ENCODE measurements at regions of chr6 and their contacts with region 1.

Region 1: DNA sequence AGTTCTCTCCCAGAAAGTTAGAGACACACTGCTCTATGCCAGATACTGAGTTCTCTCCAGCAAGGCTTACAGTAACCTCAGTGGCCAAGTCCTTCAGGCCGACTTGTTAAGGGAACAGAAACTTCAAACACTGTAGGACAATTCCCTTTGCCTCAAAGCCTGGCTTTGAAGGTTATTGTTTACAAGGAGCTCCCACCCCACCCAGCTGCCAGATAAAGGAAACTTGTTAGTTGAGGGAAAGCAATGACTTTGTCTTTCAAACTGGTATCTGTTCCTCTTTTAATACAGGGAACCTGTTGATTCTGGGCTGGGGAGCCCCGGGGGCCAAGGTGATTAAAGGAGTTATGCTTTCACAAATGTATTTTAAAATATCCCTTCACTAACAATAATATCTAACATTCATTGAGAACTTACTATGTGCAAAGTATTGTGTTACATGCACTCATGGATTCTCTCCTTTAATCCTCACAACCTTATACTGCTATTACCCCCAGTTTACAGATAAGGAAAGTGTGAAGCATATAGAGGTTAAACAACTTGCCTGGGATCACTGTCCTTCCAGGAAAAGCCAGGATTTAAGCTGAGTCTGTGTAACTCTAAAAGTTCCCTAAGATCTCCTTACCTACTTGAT is 27.6 kb upstream of the CDKN1A start:
- DNase-seq: peak; percentile 71
- ATAC-seq: peak; percentile 86
- H3K4me3 ChIP-seq: no peak overlapping the region
- H3K4me3 Mint-ChIP-seq: no peak overlapping the region
- H3K27ac ChIP-seq: no peak overlapping the region
- H3K27ac Mint-ChIP-seq: peak overlapping the region; percentile 67
- H3K4me1 ChIP-seq: peaks cover 20 to 23% of the 10 kb centered on the region in 2 donors
- H3K4me1 Mint-ChIP-seq: peaks cover 30% of the 10 kb centered on the region
- H3K27me3 ChIP-seq: no peaks in the 10 kb centered on the region
- H3K27me3 Mint-ChIP-seq: peaks cover 7% of the 10 kb centered on the region
- CTCF ChIP-seq: no peak

Region 2: DNA sequence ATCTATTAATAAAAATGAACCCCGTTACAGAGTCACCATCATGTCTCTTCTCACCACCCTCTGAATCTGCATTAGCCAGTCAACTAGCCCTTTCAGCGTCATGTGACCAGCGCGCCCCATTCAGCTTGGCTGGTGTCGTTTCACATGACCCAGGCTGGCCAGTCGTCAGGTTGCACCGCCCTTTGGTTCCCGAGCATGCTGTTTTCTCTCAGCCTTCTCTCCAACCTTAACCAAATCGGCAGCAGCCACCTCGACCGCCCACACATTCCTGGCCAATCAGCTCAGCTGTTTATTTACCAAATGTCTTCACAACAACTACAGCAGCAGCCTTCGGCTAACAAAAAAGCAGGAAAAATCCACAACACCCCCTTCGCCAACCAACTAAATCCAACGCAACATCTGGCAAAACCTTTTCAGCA is 51.2 kb before region 1 on chr6:
- CTCF ChIA-PET with region 1: no interaction called
- POLR2A ChIA-PET with region 1: interaction called, 11 read pairs
- intact Hi-C with region 1: no loop called
- DNase-seq: no peak
- ATAC-seq: no peak
- H3K4me3 ChIP-seq: no peak overlapping the region
- H3K4me3 Mint-ChIP-seq: peak overlapping the region; percentile 41
- H3K27ac ChIP-seq: no peak overlapping the region
- H3K27ac Mint-ChIP-seq: peak overlapping the region; percentile 61
- H3K4me1 ChIP-seq: peaks cover 42% of the 10 kb centered on the region in 2 donors
- H3K4me1 Mint-ChIP-seq: peaks cover 70% of the 10 kb centered on the region
- H3K27me3 ChIP-seq: no peaks in the 10 kb centered on the region
- H3K27me3 Mint-ChIP-seq: no peaks in the 10 kb centered on the region
- CTCF ChIP-seq: no peak

Region 3: GRCh38 chr6:36631326-36632011 is 19.5 kb before region 1 on chr6:
- CTCF ChIA-PET with region 1: no interaction called
- POLR2A ChIA-PET with region 1: no interaction called
- intact Hi-C with region 1: no loop called
- DNase-seq: no peak
- ATAC-seq: no peak
- H3K4me3 ChIP-seq: no peak overlapping the region
- H3K4me3 Mint-ChIP-seq: no peak overlapping the region
- H3K27ac ChIP-seq: no peak overlapping the region
- H3K27ac Mint-ChIP-seq: no peak overlapping the region
- H3K4me1 ChIP-seq: peaks cover 14 to 24% of the 10 kb centered on the region in 2 donors
- H3K4me1 Mint-ChIP-seq: peaks cover 28% of the 10 kb centered on the region
- H3K27me3 ChIP-seq: no peaks in the 10 kb centered on the region
- H3K27me3 Mint-ChIP-seq: no peaks in the 10 kb centered on the region
- CTCF ChIP-seq: no peak